K562 (cell line): ENCODE measurements at regions of chr15 and their contacts with region 1.

Region 1: DNA sequence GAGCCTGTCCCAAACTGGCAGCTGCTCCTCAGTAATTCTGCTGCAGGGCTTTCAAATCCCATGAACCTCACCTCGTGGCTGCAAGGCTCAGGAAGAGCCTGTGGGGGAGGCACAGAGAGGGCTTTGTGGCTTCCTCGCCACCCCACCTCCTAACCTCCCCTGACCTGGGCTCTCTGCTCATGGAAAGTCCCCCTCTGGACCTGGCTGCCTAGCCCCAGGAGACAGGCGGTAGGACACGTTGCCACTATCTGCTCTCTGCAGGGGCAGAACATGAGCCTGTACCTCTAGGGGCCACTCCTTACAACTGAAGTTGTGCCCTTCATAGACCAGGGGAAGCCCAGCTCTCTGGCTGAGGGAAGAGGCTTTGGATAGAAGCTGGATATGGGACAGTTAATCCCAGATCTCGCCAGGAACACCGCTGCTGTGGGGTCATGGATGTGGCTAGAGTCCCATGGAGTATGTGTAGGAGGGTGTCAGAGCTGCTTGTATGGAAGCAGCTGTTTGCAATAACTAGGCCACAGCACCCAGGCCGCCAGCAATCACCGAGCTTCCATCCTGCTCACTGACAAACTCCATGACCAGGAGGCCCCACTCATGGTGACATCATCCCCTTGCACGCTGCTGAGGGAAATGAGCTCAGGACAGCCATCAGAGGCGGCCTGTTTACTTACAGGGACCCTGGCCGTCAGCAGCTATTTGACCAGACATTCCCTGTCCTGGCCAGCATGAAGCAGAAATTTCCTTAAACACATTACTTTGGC is 34.0 kb upstream of the CILP start:
- DNase-seq: peak in 1 of 4 experiments; percentile 32
- ATAC-seq: peak; percentile 72
- H3K4me3 ChIP-seq: no peak overlapping the region
- H3K27ac ChIP-seq: peak overlapping the region; percentile 21; the same call in 1 of the 3 replicates
- H3K4me1 ChIP-seq: peaks cover 11 to 15% of the 10 kb centered on the region in 2 experiments; a peak in 4 of 5 replicates
- H3K27me3 ChIP-seq: no peaks in the 10 kb centered on the region
- CTCF ChIP-seq: no peak
- EP300 ChIP-seq: no peak
- POLR2A ChIP-seq: no peak
- RAD21 ChIP-seq: no peak

Region 2: GRCh38 chr15:65231306-65231705 is 14.0 kb before region 1 on chr15:
- CTCF ChIA-PET with region 1: no interaction called
- POLR2A ChIA-PET with region 1: interaction called, 10 read pairs
- in situ Hi-C with region 1: no loop called
- intact Hi-C with region 1: no loop called
- DNase-seq: peak in 1 of 4 experiments; percentile 28
- ATAC-seq: no peak
- H3K4me3 ChIP-seq: no peak overlapping the region
- H3K27ac ChIP-seq: no peak overlapping the region
- H3K4me1 ChIP-seq: peaks cover under 1 to 1% of the 10 kb centered on the region in 2 experiments; a peak in 2 of 5 replicates
- H3K27me3 ChIP-seq: no peaks in the 10 kb centered on the region
- CTCF ChIP-seq: no peak
- EP300 ChIP-seq: no peak
- POLR2A ChIP-seq: no peak
- RAD21 ChIP-seq: no peak